Activated T-helper 2 cell treated with anti-CD3 and anti-CD28 coated beads, Interferon-gamma antibody, Interleukin-2, Interleukin-4, amounts not matched to agents 10 μg/mL and 5 μg/mL and 100 μg/mL, durations not matched to agents 14 hours and 24 hours and 36 hours (primary cell): ENCODE measurements at regions of chr3 and their contacts with region 1.

Region 1: DNA sequence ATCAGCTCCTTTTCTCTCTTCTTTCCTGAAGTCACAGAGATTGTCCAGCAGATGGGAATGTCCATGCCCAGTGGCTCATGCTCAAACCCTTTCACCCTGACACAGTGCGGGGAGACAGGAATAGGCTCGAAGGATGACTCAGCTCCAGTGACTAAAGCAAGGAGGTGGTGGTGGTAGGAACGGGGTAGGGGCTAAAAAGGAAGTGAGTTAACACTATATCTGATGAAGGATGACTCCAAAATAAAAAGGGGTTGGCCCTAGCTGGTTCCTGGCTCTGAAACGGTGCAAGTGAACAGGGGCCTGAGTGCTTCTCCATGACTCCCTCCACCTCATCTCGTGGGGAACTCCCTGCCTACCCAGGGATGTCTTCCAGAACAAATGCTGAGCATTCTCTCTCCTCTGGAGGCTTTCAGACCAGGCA is 167.4 kb upstream of the LPP start:
- DNase-seq: peak; percentile 35
- H3K4me3 Mint-ChIP-seq: peak overlapping the region; percentile 22
- H3K27ac Mint-ChIP-seq: peak overlapping the region; percentile 65
- H3K4me1 Mint-ChIP-seq: peaks cover 51% of the 10 kb centered on the region
- H3K27me3 Mint-ChIP-seq: no peaks in the 10 kb centered on the region

Region 2: DNA sequence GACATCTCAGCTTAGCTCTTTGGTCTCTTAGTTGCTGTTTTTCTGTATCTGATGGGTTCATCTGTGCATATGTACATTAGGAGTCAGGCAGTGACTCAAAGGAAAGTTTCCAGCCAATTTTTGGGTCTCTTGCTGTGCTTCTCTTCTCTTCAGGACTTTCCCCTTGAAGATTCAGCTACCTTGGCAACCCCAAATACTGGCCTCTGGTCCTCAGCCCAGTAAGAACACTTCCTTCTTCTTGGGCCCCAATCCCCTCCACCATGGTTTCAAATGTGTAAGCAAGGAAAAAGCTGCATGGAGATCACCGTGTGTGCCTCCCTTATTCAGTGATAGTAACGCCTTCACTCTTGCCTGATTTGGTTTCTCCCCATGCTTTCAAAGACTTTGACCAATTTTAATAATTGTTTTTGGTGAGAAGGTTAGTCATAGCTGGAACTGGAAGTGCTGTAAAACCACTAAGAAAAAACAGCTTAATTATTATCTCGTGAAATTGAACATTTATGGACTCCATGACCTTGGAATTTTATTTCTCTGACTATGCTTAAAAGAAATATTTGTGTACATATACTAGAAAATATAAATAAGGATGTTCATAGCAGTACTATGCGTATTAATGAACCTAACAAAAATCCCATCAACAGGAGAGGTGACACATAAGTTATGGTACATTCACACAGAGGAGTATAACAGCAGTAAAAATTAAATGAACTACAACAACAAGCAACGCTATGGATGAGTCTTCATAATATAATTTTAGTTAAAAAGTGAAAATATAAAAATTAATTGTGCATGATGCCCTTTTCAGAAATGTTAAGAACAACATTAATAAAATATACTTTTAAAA is 115.9 kb before region 1 on chr3:
- intact Hi-C with region 1: loop called (anchors 5 kb)
- DNase-seq: no peak
- H3K4me3 Mint-ChIP-seq: no peak overlapping the region
- H3K27ac Mint-ChIP-seq: peak overlapping the region; percentile 82
- H3K4me1 Mint-ChIP-seq: peaks cover 32% of the 10 kb centered on the region
- H3K27me3 Mint-ChIP-seq: no peaks in the 10 kb centered on the region